ENCODE measurements at regions of chr12 and their contacts with region 1.

Region 1: DNA sequence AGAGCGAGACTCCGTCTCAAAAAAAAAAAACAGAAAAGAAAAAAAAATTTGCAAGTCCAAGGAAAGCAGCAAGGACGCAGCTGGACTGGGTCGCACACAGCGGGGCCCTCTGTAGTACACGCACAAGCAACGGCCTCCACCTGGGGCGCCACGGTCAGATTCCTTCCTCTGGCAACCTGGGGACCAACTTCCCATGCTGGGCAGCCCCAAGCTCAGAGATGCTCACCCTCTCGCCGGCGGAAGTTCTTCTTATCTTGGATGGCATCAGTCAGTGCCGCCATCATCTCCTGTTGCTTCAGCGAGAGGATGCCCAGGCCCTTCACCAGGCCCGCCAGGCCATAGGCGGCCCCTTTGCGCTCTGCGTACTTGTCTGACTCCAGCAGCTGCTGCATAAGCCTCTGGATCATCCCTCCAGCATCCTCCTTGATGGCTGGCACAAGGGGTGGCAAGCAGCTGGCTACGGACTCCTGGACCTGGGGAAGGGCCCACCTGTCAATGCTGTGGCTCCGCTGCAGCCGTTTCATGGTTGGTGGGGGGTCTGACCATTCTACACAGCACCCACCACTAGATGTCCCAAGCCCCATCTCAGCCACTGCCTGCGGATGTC is 34.5 kb upstream of the RAB35 start:
- DNase-seq: no peak
- H3K4me3 ChIP-seq: no peak overlapping the region
- H3K27ac ChIP-seq: no peak overlapping the region
- H3K4me1 ChIP-seq: no peaks in the 10 kb centered on the region
- H3K27me3 ChIP-seq: no peaks in the 10 kb centered on the region
- CTCF ChIP-seq: no peak

Region 2: DNA sequence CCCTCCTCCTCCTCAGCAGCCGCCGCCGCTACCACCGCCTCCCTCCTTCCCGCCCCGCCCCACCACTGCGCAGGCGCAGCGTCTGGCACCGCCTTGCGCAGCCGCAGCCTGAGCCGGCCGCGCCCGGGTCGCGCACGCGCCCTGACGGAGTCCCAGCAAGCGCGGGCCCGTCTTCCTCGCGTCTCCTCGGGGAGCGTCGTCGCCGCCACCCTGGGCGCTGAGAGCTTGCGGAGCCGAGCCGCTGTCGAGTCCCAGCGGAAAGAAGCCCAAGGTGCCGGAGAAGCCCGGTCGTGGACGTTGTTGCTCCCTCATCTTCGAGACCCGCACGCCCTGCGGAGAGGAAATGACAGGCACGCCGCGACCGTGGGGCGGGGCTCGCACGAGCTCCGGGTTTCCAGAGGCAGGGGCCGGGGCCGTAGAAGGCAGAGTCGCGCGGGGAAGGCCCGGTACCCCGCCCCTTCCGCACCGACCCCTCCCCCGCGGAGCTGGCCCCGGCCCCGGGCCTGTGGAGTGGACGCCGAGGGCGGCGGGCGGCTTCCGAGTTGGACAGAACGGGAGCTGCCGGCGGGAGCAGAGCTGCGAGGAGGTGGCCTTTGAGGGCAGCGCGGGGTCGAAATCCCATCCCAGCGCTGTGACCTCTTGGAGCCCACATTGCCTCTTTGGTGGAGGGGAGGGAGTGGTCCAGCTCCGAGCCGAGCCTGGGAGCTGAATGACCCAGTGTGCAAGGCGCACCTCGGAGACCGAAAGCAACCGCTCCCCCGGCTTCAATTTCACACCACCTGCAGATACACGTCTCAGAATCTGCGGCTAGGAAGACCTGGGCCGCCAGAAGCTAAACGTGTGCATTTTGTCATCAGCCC is 34.0 kb before region 1 on chr12:
- CTCF ChIA-PET with region 1: no interaction called
- dilution Hi-C with region 1: loop called (anchors 5 kb)
- in situ Hi-C with region 1: no loop called
- intact Hi-C with region 1: no loop called
- DNase-seq: peak; percentile 91
- H3K4me3 ChIP-seq: peak overlapping the region; percentile 61 to 97 (median 95)
- H3K27ac ChIP-seq: peak overlapping the region; percentile 76
- H3K4me1 ChIP-seq: peaks cover 25% of the 10 kb centered on the region
- H3K27me3 ChIP-seq: no peaks in the 10 kb centered on the region
- CTCF ChIP-seq: no peak

Region 3: DNA sequence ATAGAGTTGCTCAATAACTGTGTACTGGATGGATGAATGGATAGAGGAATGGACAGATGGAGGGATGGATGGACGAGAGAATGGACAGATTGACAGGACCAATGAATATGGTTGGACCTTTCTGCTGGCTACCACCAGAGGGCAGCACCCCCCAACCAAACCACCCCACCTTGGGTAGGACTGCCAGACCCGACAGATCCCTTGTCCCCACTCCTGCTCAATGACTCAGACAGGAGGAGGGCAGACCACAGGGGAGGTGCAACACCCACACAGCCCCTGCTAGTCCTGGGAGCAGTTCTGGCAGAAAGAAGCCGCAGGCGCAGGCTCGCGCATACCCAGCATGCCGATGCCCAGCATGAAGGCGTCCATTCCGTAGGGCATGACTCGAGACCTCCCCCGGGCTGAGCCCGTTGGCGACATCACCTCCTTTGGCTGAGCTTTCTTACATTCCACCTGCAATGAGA is 205.6 kb after region 1 on chr12:
- CTCF ChIA-PET with region 1: no interaction called
- dilution Hi-C with region 1: no loop called
- in situ Hi-C with region 1: no loop called
- intact Hi-C with region 1: no loop called
- DNase-seq: peak; percentile 91
- H3K4me3 ChIP-seq: peak overlapping the region in 2 of 3 experiments; percentile 15 to 17
- H3K27ac ChIP-seq: no peak overlapping the region
- H3K4me1 ChIP-seq: peaks cover 5% of the 10 kb centered on the region
- H3K27me3 ChIP-seq: no peaks in the 10 kb centered on the region
- CTCF ChIP-seq: peak; percentile 91 to 95

Measured in mammary epithelial cell (primary cell).